PC-9 (cell line): ENCODE measurements at regions of chr15 and their contacts with region 1.

Region 1: DNA sequence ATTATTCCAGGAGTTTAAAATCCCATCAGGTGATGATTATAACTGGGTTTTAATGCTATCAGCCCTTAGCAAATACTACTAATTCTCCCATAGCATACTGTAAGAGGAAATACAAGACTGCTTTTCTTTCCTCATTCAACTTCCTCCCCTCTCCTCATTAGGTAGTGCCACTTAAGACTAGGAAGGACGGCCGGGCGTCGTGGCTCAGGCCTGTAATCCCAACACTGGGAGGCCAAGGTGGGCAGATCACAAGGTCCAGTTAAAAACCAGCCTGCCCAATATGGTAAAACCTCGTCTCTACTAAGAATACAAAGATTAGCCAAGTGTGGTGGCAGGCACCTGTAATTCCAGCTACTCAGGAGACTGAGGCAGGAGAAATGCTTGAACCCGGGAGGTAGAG is 14.7 kb downstream of the NDUFAF1 start:
- DNase-seq: no peak
- H3K4me3 ChIP-seq: no peak overlapping the region
- H3K27ac ChIP-seq: no peak overlapping the region
- H3K4me1 ChIP-seq: no peaks in the 10 kb centered on the region
- H3K27me3 ChIP-seq: no peaks in the 10 kb centered on the region
- CTCF ChIP-seq: no peak

Region 2: DNA sequence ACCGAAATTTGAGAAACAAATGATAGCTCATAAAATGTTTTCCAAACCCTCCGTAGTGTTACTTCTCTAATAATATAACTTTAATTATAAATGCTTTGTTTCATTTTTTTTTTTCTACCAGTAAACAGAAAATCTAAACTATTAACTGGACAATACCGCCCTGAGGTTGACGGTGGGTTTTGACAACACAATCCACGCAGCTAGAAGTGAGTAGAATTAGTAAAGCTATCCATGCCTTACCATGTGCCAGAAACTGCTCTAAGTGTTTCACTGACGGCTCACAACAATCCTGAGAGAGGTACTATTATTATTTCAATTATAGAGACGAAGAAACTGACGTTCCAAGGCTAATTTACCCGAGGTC is 14.2 kb after region 1 on chr15:
- CTCF ChIA-PET with region 1: no interaction called
- POLR2A ChIA-PET with region 1: interaction called, 13 read pairs
- intact Hi-C with region 1: no loop called
- DNase-seq: no peak
- H3K4me3 ChIP-seq: peak overlapping the region; percentile 95
- H3K27ac ChIP-seq: peak overlapping the region; percentile 50; the same call in 1 of the 2 replicates
- H3K4me1 ChIP-seq: no peaks in the 10 kb centered on the region
- H3K27me3 ChIP-seq: no peaks in the 10 kb centered on the region
- CTCF ChIP-seq: no peak

Region 3: GRCh38 chr15:41462084-41462795 is 74.6 kb after region 1 on chr15:
- CTCF ChIA-PET with region 1: no interaction called
- POLR2A ChIA-PET with region 1: no interaction called
- intact Hi-C with region 1: no loop called
- DNase-seq: no peak
- H3K4me3 ChIP-seq: no peak overlapping the region
- H3K27ac ChIP-seq: no peak overlapping the region
- H3K4me1 ChIP-seq: no peaks in the 10 kb centered on the region
- H3K27me3 ChIP-seq: no peaks in the 10 kb centered on the region
- CTCF ChIP-seq: no peak

Region 4: GRCh38 chr15:41730543-41730942 is 342.9 kb after region 1 on chr15:
- CTCF ChIA-PET with region 1: no interaction called
- POLR2A ChIA-PET with region 1: no interaction called
- intact Hi-C with region 1: no loop called
- DNase-seq: no peak
- H3K4me3 ChIP-seq: no peak overlapping the region
- H3K27ac ChIP-seq: no peak overlapping the region
- H3K4me1 ChIP-seq: no peaks in the 10 kb centered on the region
- H3K27me3 ChIP-seq: no peaks in the 10 kb centered on the region
- CTCF ChIP-seq: no peak